Pancreas (tissue), 10 donors: ENCODE measurements at regions of chr11 and their contacts with region 1.

Region 1: GRCh38 chr11:17498475-17498874 is 21.8 kb upstream of the ABCC8 start:
- DNase-seq: peak in 1 of 6 donors; percentile 34
- ATAC-seq: no peak
- H3K4me3 ChIP-seq: no peak overlapping the region
- H3K27ac ChIP-seq: no peak overlapping the region
- H3K4me1 ChIP-seq: no peaks in the 10 kb centered on the region
- H3K27me3 ChIP-seq: no peaks in the 10 kb centered on the region
- CTCF ChIP-seq: no peak

Region 2: DNA sequence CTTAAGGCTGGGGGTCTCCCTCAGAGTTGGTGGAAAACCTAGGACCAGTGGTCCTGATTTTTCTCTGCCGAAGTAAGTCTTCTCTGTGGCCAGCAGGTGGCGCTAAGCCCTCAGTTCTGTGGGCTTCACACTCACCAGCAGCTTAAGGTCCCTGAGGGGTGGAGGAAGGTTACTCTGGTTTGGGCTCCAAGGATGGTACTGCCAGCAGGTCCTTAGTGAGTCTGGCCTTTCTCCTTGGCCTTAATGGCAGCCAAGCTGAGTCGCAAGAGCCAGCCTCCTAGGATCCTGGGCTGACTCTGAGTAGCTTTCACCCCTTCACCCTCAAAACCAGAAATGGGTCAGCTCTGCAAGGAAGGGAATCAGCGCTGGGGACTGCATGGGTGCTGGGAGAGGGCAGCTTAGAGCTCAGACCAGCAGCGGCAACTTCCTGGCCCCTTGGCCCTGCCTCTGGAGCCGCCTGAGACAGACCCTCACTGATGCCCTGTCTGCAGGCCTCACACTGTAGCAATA is 114.4 kb before region 1 on chr11:
- intact Hi-C with region 1: loop called (anchors 2 to 10 kb)
- DNase-seq: peak in 5 of 6 donors; percentile 57 to 94 (median 79)
- ATAC-seq: peak; percentile 39 to 77 (median 64)
- H3K4me3 ChIP-seq: no peak overlapping the region
- H3K27ac ChIP-seq: no peak overlapping the region
- H3K4me1 ChIP-seq: peaks cover 0 to 6% (median 0%) of the 10 kb centered on the region in 3 donors
- H3K27me3 ChIP-seq: no peaks in the 10 kb centered on the region
- CTCF ChIP-seq: peak; percentile 84 to 91 (median 86)

Region 3: GRCh38 chr11:17391493-17392355 is 106.8 kb before region 1 on chr11:
- intact Hi-C with region 1: loop called in 2 of 3 experiments (anchors 2 to 10 kb)
- DNase-seq: no peak
- ATAC-seq: no peak
- H3K4me3 ChIP-seq: no peak overlapping the region
- H3K27ac ChIP-seq: no peak overlapping the region
- H3K4me1 ChIP-seq: peaks cover 0 to 4% (median 0%) of the 10 kb centered on the region in 3 donors
- H3K27me3 ChIP-seq: no peaks in the 10 kb centered on the region
- CTCF ChIP-seq: no peak

Region 4: GRCh38 chr11:17544181-17544622 is 45.7 kb after region 1 on chr11 and contains the start of gene USH1C:
- intact Hi-C with region 1: no loop called
- DNase-seq: peak; percentile 27 to 80 (median 64)
- ATAC-seq: peak; percentile 73 to 84 (median 83)
- H3K4me3 ChIP-seq: peak within 1 kb of the TSS in 3 of 4 donors; percentile 13 to 38 (median 26)
- H3K27ac ChIP-seq: peak within 1 kb of the TSS; percentile 17 to 31 (median 22)
- H3K4me1 ChIP-seq: peaks cover 0 to 6% (median 0%) of the 10 kb centered on the region in 3 donors
- H3K27me3 ChIP-seq: no peaks in the 10 kb centered on the region
- CTCF ChIP-seq: no peak
- total RNA-seq, gene USH1C: 3.5 to 9.8 (median 7.6) TPM